Activated CD4-positive, alpha-beta T cell treated with anti-CD3 and anti-CD28 coated beads for 36 hours (primary cell): ENCODE measurements at regions of chr1 and their contacts with region 1.

Region 1: GRCh38 chr1:183932412-183932811 is 105.1 kb downstream of the COLGALT2 start:
- DNase-seq: no peak
- ATAC-seq: no peak
- H3K4me3 Mint-ChIP-seq: no peak overlapping the region
- H3K27ac Mint-ChIP-seq: no peak overlapping the region
- H3K4me1 Mint-ChIP-seq: no peaks in the 10 kb centered on the region
- H3K27me3 Mint-ChIP-seq: no peaks in the 10 kb centered on the region

Region 2: DNA sequence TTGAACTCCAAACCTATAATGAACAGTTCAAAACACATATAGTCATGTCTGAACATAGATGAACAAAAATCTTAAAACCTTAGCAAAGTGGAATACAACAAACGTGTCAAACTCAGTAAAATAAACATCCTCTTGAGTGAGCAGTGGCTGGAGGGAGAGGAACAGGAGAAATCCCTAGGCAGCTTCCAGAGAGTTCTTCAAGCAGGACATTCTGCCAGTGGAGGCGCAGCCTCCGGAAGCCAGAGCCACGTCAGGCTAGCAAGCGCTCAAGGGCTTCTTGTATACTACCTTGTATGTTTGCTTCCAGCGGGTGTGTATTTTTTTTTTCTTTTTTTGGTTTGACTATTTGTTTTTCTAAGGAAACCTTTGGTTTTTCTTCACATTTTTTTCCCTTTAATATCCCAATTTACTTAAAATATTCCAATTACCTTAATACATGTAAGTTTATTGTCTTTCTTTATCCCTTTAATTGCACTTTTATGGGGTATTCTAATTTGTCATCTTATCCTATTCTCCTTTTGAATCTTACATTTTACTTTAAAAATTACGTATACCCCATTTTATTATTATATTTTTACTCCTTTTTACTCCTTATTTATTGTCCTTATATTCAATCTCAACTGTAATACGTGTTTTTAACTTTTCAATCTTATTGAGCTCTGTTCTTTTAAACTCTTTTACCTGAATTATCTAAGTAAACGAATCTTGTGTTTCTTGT is 63.1 kb after region 1 on chr1:
- CTCF ChIA-PET with region 1: no interaction called
- POLR2A ChIA-PET with region 1: no interaction called
- intact Hi-C with region 1: loop called in 1 of 2 experiments (anchors 10 kb)
- DNase-seq: no peak
- ATAC-seq: no peak
- H3K4me3 Mint-ChIP-seq: no peak overlapping the region
- H3K27ac Mint-ChIP-seq: no peak overlapping the region
- H3K4me1 Mint-ChIP-seq: peaks cover 7% of the 10 kb centered on the region
- H3K27me3 Mint-ChIP-seq: no peaks in the 10 kb centered on the region

Region 3: DNA sequence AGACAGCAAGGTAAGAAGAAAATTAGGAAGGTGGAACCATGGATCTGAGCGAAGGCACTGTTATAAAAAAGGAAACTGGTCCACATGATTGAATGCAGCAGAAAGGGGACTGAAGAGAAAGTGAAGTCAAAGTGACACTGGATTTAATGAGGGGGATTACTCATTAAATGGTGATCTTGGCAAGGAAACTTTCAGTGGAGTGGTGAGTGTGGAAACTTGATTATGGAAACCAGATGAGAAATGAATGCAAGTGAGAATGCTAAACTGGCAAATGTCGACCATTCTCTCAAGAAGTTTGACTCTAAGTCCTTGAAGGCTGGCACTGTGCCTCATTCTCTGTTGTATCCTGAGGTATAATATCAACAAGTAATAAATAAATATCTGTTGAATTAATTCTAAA is 81.9 kb after region 1 on chr1:
- CTCF ChIA-PET with region 1: no interaction called
- POLR2A ChIA-PET with region 1: no interaction called
- intact Hi-C with region 1: no loop called
- DNase-seq: no peak
- ATAC-seq: no peak
- H3K4me3 Mint-ChIP-seq: no peak overlapping the region
- H3K27ac Mint-ChIP-seq: no peak overlapping the region
- H3K4me1 Mint-ChIP-seq: no peaks in the 10 kb centered on the region
- H3K27me3 Mint-ChIP-seq: peaks cover 12% of the 10 kb centered on the region